Natural killer cell (primary cell): ENCODE measurements at regions of chr9 and their contacts with region 1.

Region 1: DNA sequence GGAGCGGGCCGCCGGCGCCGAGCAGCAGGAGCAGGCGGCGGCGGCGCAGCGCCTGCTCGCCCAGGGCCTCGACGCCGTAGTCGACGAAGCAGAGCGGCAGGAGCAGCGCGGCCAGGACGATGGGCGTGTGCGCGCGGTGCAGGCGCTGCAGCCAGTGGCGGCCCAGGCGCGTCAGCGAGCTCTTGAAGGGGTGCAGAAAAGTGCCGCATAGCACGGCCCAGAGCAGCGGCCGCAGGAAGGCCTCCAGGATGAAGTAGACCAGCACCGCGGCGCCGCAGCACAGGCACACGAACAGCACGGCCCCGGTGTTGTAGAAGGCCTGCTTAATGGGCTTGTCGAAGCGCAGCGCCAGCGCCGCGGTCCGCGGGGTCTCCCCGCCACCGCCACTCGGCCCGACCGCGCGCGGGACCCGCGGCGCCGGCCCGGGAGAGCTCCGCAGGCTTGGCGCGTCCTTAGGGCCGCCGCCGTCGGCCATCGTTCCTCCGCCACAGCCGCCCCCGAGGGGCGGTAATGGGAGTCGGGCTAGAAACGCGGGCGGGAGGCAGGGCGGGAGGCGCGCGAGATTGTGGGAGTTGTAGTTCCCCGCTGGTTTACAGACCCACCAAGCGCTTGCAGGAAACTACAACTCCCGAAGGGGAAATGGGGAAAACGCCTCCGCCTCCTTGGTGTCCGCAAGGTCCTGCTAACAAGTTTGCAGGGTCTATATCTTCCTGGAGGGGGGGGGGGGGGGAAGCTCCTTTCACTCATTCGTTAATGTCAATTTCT is at the start of gene TMEM245:
- DNase-seq: peak; percentile 87 to 98
- ATAC-seq: peak; percentile 93 to 99 (median 95)
- H3K4me3 ChIP-seq: peak within 1 kb of the TSS; percentile 77
- H3K4me3 Mint-ChIP-seq: peak within 1 kb of the TSS; percentile 93
- H3K27ac ChIP-seq: peak within 1 kb of the TSS; percentile 54
- H3K27ac Mint-ChIP-seq: peak within 1 kb of the TSS; percentile 63 to 82
- H3K4me1 ChIP-seq: peaks cover 20% of the 10 kb centered on the region
- H3K4me1 Mint-ChIP-seq: peaks cover 36 to 43% of the 10 kb centered on the region in 2 donors
- H3K27me3 ChIP-seq: no peaks in the 10 kb centered on the region
- H3K27me3 Mint-ChIP-seq: peaks cover 0 to 3% of the 10 kb centered on the region in 2 donors
- CTCF ChIP-seq: no peak
- total RNA-seq, gene TMEM245: 14.5 to 22.5 (median 21.8) TPM

Region 2: GRCh38 chr9:109012876-109013678 is 106.5 kb before region 1 on chr9 and contains the start of gene CTNNAL1:
- intact Hi-C with region 1: loop called (anchors 1 kb)
- DNase-seq: peak; percentile 86 to 90
- ATAC-seq: peak; percentile 93 to 99 (median 96)
- H3K4me3 ChIP-seq: peak within 1 kb of the TSS; percentile 51
- H3K4me3 Mint-ChIP-seq: peak within 1 kb of the TSS; percentile 98
- H3K27ac ChIP-seq: peak within 1 kb of the TSS; percentile 50
- H3K27ac Mint-ChIP-seq: peak within 1 kb of the TSS; percentile 84 to 91
- H3K4me1 ChIP-seq: peaks cover 15% of the 10 kb centered on the region
- H3K4me1 Mint-ChIP-seq: peaks cover 24 to 29% of the 10 kb centered on the region in 2 donors
- H3K27me3 ChIP-seq: no peaks in the 10 kb centered on the region
- H3K27me3 Mint-ChIP-seq: peaks cover 0 to 7% of the 10 kb centered on the region in 2 donors
- CTCF ChIP-seq: no peak
- total RNA-seq, gene CTNNAL1: 2.6 to 7.6 (median 2.7) TPM

Region 3: DNA sequence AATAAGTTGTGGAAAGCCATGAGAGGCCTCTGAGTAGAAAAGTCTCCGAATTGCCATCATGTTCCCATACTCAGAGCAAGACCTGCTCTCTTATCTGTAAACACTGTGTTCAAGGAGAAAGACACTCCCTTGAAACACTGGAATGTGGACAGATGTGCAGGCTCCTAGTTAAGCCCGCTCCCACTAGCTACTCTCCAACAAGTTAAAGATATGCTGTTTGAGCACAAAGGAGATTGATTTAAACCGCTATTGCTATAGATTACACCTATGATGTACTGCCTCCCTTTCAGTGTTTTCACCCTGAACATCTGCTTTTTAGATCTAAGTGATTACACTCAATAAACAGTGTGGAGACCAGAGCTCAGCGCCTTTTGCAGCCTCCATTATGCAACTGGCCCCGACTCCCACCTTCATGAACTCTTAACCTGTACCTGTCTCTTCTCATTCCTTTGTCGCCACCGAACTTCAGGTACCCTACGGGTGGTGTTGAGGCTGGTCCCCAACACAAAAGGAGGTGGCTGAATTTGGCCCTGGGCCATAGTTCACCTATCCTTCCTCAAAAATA is 47.4 kb before region 1 on chr9:
- intact Hi-C with region 1: no loop called
- DNase-seq: no peak
- ATAC-seq: no peak
- H3K4me3 ChIP-seq: no peak overlapping the region
- H3K4me3 Mint-ChIP-seq: no peak overlapping the region
- H3K27ac ChIP-seq: no peak overlapping the region
- H3K27ac Mint-ChIP-seq: no peak overlapping the region
- H3K4me1 ChIP-seq: no peaks in the 10 kb centered on the region
- H3K4me1 Mint-ChIP-seq: no peaks in the 10 kb centered on the region
- H3K27me3 ChIP-seq: no peaks in the 10 kb centered on the region
- H3K27me3 Mint-ChIP-seq: no peaks in the 10 kb centered on the region
- CTCF ChIP-seq: no peak